H1 (cell line): ENCODE measurements at regions of chr11 and their contacts with region 1.

Region 1: GRCh38 chr11:125871391-125872137 is 15.9 kb upstream of the HYLS1 start:
- DNase-seq: peak in 1 of 2 experiments; percentile 87
- H3K4me3 ChIP-seq: no peak overlapping the region
- H3K27ac ChIP-seq: no peak overlapping the region
- H3K4me1 ChIP-seq: no peaks in the 10 kb centered on the region; a peak in 1 of 7 replicates
- H3K27me3 ChIP-seq: no peaks in the 10 kb centered on the region
- CTCF ChIP-seq: peak; percentile 68 to 88 (median 79)
- EP300 ChIP-seq: no peak
- POLR2A ChIP-seq: no peak
- RAD21 ChIP-seq: peak; percentile 91 to 92

Region 2: GRCh38 chr11:125724125-125724524 is 147.4 kb before region 1 on chr11:
- CTCF ChIA-PET with region 1: interaction called, 15 read pairs
- POLR2A ChIA-PET with region 1: no interaction called
- DNase-seq: no peak
- H3K4me3 ChIP-seq: no peak overlapping the region
- H3K27ac ChIP-seq: no peak overlapping the region
- H3K4me1 ChIP-seq: no peaks in the 10 kb centered on the region
- H3K27me3 ChIP-seq: no peaks in the 10 kb centered on the region
- CTCF ChIP-seq: peak in 2 of 3 experiments; percentile 56 to 64; a peak in 3 of 4 replicates
- EP300 ChIP-seq: no peak
- POLR2A ChIP-seq: no peak
- RAD21 ChIP-seq: peak; percentile 68 to 77

Region 3: GRCh38 chr11:125971618-125972017 is 100.1 kb after region 1 on chr11:
- CTCF ChIA-PET with region 1: no interaction called
- POLR2A ChIA-PET with region 1: no interaction called
- DNase-seq: no peak
- H3K4me3 ChIP-seq: no peak overlapping the region
- H3K27ac ChIP-seq: no peak overlapping the region
- H3K4me1 ChIP-seq: no peaks in the 10 kb centered on the region
- H3K27me3 ChIP-seq: no peaks in the 10 kb centered on the region
- CTCF ChIP-seq: no peak
- EP300 ChIP-seq: no peak
- POLR2A ChIP-seq: no peak
- RAD21 ChIP-seq: no peak